ENCODE measurements at regions of chr18 and their contacts with region 1.

Region 1: GRCh38 chr18:44826418-44827259 is 146.0 kb downstream of the SETBP1 start:
- DNase-seq: peak in 1 of 2 donors; percentile 81
- ATAC-seq: peak; percentile 82
- H3K4me3 ChIP-seq: no peak overlapping the region
- H3K27ac ChIP-seq: peak overlapping the region; percentile 46 to 47
- H3K4me1 ChIP-seq: peaks cover 2 to 3% of the 10 kb centered on the region in 2 donors
- H3K27me3 ChIP-seq: no peaks in the 10 kb centered on the region

Region 2: GRCh38 chr18:44691148-44691925 is 135.3 kb before region 1 on chr18:
- intact Hi-C with region 1: no loop called
- DNase-seq: no peak
- ATAC-seq: no peak
- H3K4me3 ChIP-seq: no peak overlapping the region
- H3K27ac ChIP-seq: no peak overlapping the region
- H3K4me1 ChIP-seq: peaks cover 3% of the 10 kb centered on the region in 2 donors
- H3K27me3 ChIP-seq: no peaks in the 10 kb centered on the region

Region 3: GRCh38 chr18:44725300-44726096 is 101.1 kb before region 1 on chr18:
- intact Hi-C with region 1: loop called in 1 of 2 experiments (anchors 5 kb)
- DNase-seq: peak; percentile 73 to 84
- ATAC-seq: peak; percentile 67
- H3K4me3 ChIP-seq: no peak overlapping the region
- H3K27ac ChIP-seq: peak overlapping the region; percentile 1 to 4
- H3K4me1 ChIP-seq: peaks cover 4 to 6% of the 10 kb centered on the region in 2 donors
- H3K27me3 ChIP-seq: no peaks in the 10 kb centered on the region

Region 4: GRCh38 chr18:44789710-44790109 is 36.9 kb before region 1 on chr18:
- intact Hi-C with region 1: loop called in 1 of 2 experiments (anchors 5 kb)
- DNase-seq: no peak
- ATAC-seq: peak; percentile 67
- H3K4me3 ChIP-seq: no peak overlapping the region
- H3K27ac ChIP-seq: peak overlapping the region in 1 of 2 donors; percentile 40
- H3K4me1 ChIP-seq: peaks cover 9 to 18% of the 10 kb centered on the region in 2 donors
- H3K27me3 ChIP-seq: no peaks in the 10 kb centered on the region

Region 5: DNA sequence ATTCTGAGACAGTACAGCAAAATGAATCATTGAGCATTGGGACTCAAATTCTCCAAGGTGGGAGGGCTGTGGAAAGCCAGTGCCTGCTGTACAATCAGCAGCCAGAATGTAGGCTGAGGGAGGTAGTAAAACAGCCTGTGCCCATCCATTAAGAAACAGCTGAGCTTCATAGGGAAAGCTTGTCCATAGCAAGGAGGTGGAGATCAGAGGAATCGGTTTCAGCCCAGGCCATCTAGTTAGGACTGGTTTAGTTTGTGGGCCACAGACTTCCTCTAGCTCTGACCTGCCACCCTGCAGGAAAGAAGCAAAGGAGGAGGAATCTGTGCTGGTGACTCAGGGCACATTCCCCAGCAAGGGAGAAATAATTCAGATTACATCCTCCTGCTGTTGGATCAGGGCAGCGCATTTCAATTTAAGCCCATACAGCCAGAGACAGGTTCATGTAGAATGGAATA is 187.4 kb after region 1 on chr18:
- intact Hi-C with region 1: loop called in 1 of 2 experiments (anchors 5 kb)
- DNase-seq: peak in 1 of 2 donors; percentile 62
- ATAC-seq: peak; percentile 36
- H3K4me3 ChIP-seq: no peak overlapping the region
- H3K27ac ChIP-seq: peak overlapping the region in 1 of 2 donors; percentile 68
- H3K4me1 ChIP-seq: peaks cover 0 to 8% of the 10 kb centered on the region in 2 donors
- H3K27me3 ChIP-seq: no peaks in the 10 kb centered on the region

Measured in aorta (tissue), 5 donors.